ENCODE measurements at regions of chr7 and their contacts with region 1.

Region 1: DNA sequence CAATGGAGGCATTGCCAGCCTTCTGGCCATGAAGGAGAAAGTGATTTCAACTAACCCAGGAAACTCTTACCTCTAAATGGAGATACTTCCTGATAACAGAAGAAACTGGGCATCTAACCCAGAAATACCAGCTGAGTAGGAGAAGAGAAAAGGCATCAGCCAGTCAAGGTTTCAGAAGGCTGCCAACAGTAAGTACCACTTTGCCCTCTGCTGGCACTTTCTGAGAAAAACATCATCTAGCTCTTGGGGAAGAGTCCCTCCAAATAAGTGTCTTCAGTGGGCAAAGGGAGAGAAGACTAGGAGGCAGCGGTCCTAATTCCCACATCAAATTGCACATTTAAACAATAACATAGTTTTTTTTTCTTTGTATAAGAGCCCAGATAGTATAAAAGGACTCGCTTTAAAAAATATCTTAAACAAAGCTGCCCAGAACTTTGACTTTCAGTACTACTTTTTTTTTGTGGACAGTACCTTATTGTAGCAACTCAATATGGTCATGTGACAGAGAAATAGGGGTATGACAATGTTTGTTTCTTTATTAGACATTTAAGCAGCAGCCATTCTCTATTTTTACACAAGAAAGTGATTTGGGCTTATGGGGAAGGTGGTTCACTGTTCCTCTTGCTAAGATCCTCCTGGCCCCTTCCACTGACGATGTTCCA is 157.3 kb downstream of the CTTNBP2 start:
- DNase-seq: peak; percentile 19
- H3K4me3 ChIP-seq: no peak overlapping the region
- CTCF ChIP-seq: peak; percentile 60

Region 2: DNA sequence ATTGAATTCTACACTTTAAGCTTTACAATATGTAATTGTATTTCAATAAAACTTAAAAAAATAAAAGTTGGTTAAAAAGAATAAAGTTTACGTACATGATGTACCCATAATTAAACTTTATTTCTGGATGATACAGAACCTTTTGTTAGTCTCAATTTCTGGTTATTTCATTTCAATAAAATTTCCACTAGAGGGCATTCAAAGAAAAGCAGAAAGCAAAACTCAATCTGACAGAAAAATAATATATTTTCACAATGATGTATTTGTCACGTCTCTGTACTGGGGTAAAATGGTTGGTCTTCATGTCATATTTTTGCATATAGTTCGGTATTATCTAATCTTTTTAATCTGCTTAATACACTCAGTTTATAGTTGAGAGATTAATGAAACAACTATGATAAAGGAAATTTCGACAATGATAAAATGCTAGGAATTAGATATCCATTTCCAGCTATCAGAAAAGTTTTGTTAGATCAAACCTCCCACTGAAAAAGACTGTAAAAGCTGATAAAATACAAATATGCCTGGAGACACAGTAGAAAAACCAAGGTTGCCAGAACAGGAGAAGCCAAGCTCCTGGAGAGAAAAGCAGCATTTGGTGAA is 316.0 kb before region 1 on chr7:
- CTCF ChIA-PET with region 1: interaction called, 13 read pairs
- POLR2A ChIA-PET with region 1: no interaction called
- DNase-seq: no peak
- H3K4me3 ChIP-seq: no peak overlapping the region
- CTCF ChIP-seq: no peak

Region 3: GRCh38 chr7:117458977-117459583 is 256.8 kb before region 1 on chr7:
- CTCF ChIA-PET with region 1: interaction called, 33 read pairs
- POLR2A ChIA-PET with region 1: no interaction called
- DNase-seq: no peak
- H3K4me3 ChIP-seq: no peak overlapping the region
- CTCF ChIP-seq: peak; percentile 35

Region 4: GRCh38 chr7:117780832-117781231 is 64.9 kb after region 1 on chr7:
- CTCF ChIA-PET with region 1: no interaction called
- POLR2A ChIA-PET with region 1: no interaction called
- DNase-seq: no peak
- H3K4me3 ChIP-seq: no peak overlapping the region
- CTCF ChIP-seq: no peak

Measured in AG04449 (cell line).